ENCODE measurements at regions of chr6 and their contacts with region 1.

Region 1: DNA sequence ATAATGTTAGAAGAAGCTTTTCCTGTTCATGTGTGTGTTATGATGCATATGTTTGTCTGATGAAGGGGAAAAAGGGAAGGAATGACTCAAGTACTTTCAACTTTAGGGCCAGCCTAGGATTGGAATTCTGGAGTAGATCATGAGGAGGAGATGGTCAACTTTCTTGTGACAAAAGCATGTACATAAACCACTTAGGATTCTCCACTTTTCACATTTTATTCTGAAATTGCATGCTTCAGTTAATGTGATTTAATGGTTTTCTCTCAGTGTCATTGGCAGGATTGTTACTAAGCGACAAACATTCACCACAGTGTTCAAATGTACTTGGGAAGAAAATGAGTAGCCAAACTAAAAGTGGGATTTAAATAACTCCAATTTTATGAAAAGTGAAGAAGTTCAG is 80.1 kb downstream of the UTRN start:
- DNase-seq: no peak
- ATAC-seq: no peak
- H3K4me3 ChIP-seq: no peak overlapping the region
- H3K4me3 Mint-ChIP-seq: no peak overlapping the region
- H3K27ac ChIP-seq: no peak overlapping the region
- H3K27ac Mint-ChIP-seq: peak overlapping the region; percentile 50
- H3K4me1 ChIP-seq: peaks cover 22% of the 10 kb centered on the region
- H3K4me1 Mint-ChIP-seq: peaks cover 74% of the 10 kb centered on the region
- H3K27me3 ChIP-seq: no peaks in the 10 kb centered on the region
- H3K27me3 Mint-ChIP-seq: no peaks in the 10 kb centered on the region
- CTCF ChIP-seq: no peak

Region 2: DNA sequence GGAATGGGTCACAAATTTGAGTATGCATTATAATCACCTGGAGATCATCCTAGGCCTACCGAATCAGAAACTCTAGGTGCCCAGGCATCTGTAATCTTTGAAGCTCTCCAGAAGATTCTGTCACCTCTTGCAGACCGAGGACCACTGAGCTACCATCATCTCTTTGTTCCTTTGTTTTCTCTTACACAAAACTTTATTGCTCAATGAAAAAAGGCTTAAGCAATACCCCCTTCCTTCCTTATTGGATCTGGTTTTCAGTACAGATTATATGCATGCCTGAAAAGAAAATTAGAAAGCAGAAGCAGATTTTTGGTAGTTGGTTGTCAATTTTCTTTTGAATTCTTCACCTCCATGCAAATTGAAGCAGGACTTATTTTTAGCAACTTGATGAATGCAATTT is 183.6 kb before region 1 on chr6:
- CTCF ChIA-PET with region 1: no interaction called
- POLR2A ChIA-PET with region 1: no interaction called
- intact Hi-C with region 1: no loop called
- DNase-seq: no peak
- ATAC-seq: no peak
- H3K4me3 ChIP-seq: no peak overlapping the region
- H3K4me3 Mint-ChIP-seq: no peak overlapping the region
- H3K27ac ChIP-seq: no peak overlapping the region
- H3K27ac Mint-ChIP-seq: no peak overlapping the region
- H3K4me1 ChIP-seq: no peaks in the 10 kb centered on the region
- H3K4me1 Mint-ChIP-seq: peaks cover 15% of the 10 kb centered on the region
- H3K27me3 ChIP-seq: no peaks in the 10 kb centered on the region
- H3K27me3 Mint-ChIP-seq: no peaks in the 10 kb centered on the region
- CTCF ChIP-seq: no peak

Region 3: DNA sequence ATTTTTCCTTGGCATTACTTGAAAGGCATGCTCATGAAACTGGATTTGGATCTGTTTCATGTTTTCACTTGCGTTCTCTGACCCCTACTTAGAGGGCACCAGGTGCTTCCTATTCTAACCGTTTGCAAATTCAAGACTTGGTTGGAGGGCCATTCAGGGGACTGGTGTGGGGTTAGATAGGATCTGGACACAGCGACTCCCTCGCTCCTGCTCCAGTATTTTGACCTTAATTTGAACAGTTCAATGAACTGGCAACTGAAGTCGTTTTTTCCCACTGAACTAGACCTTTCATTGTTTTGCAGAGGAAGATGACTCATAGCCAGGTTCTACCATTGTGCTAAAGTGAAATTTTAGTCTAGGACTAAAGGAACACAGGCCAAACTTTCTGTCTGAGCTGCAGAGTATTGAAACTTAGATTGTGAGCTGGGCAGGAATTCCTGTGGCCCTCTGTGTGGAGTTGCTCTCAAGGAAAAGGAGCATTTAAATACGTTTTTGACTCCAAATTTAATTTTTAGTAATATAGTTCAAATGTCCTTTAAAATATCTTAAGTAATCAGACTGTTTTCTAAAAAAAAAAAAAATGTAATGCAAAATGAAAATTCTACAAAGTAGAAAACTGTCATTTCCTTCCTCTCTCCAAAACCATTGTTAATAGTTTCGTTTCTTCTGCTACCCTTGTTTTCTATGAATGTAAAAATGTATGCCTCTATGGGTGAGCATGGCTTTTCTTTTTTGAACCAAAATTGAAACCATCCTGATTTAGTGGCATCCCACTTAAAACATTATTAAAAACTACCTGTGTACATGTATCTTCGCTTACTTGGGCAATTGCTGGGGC is 15.4 kb before region 1 on chr6:
- CTCF ChIA-PET with region 1: no interaction called
- POLR2A ChIA-PET with region 1: interaction called, 3 read pairs
- intact Hi-C with region 1: loop called in 1 of 2 experiments (anchors 2 kb)
- DNase-seq: peak in 2 of 9 experiments; percentile 52 to 67
- ATAC-seq: peak; percentile 53
- H3K4me3 ChIP-seq: peak overlapping the region; percentile 8 to 29
- H3K4me3 Mint-ChIP-seq: peak overlapping the region; percentile 74
- H3K27ac ChIP-seq: peak overlapping the region; percentile 40 to 88
- H3K27ac Mint-ChIP-seq: peak overlapping the region; percentile 93
- H3K4me1 ChIP-seq: peaks cover 81% of the 10 kb centered on the region
- H3K4me1 Mint-ChIP-seq: peaks cover 90% of the 10 kb centered on the region
- H3K27me3 ChIP-seq: no peaks in the 10 kb centered on the region
- H3K27me3 Mint-ChIP-seq: no peaks in the 10 kb centered on the region
- CTCF ChIP-seq: no peak

Region 4: GRCh38 chr6:144384427-144384826 is 19.2 kb after region 1 on chr6:
- CTCF ChIA-PET with region 1: no interaction called
- POLR2A ChIA-PET with region 1: no interaction called
- intact Hi-C with region 1: no loop called
- DNase-seq: no peak
- ATAC-seq: no peak
- H3K4me3 ChIP-seq: no peak overlapping the region
- H3K4me3 Mint-ChIP-seq: no peak overlapping the region
- H3K27ac ChIP-seq: no peak overlapping the region
- H3K27ac Mint-ChIP-seq: peak overlapping the region; percentile 27
- H3K4me1 ChIP-seq: peaks cover 11% of the 10 kb centered on the region
- H3K4me1 Mint-ChIP-seq: peaks cover 57% of the 10 kb centered on the region
- H3K27me3 ChIP-seq: no peaks in the 10 kb centered on the region
- H3K27me3 Mint-ChIP-seq: no peaks in the 10 kb centered on the region
- CTCF ChIP-seq: no peak